Left ventricle myocardium superior (tissue), 1 donor: ENCODE measurements at regions of chr11 and their contacts with region 1.

Region 1: DNA sequence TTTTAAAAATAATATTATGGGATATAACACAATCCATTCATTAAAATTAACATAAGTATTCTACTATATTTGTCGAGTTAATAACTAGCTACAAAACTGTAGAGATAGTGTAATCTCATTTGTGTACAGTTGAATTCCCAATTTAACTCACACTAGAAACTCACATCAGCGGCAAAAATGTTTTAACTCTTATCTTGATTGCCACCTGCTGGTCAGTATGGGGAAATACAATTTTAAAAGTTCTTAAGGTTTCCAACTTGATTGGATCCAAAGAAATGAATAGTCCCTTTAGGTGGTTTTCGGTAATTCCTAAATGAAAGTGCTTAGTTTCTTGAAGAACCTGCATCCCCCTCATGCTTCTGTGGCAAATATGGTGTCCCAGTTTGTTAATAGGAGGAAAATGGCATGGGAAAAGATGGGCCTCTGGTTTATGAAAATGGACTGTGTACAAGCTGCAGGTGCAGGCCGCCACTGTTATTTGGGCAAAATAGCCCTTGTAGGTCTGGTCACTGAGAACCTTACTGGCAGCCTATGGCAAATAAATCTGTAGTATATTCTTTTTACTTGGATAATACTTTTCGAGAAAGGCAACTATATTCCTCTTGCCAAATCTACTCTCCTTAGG is 33.7 kb upstream of the SLC17A6 start:
- DNase-seq: no peak
- ATAC-seq: no peak

Region 2: DNA sequence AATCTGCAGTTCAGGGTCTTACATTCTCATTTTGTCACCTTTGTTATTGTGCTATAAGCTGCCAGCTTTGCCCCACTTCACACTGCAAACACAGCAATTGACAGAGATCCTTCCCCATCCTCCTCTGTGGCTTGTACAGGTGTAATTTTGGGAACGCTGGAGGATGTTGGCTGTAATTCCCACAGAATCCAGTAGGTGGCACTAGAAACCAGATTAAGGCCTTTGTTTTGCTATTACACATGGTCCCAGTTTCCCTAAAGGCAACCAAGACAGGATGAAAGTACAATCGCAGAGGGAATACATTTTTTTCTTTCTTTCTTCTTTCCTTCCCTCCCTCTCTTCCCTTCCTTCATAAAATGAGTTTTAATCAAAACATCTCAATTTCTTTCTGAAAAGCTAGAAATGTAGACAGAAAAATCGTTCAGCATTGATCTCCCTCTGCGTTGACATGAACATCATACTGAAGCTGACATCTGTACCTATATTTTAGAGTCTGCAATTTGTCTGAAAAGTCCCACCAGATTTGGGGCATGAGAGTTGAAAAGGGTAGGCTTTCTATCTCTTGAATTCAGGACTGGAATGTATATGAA is 1656.4 kb before region 1 on chr11:
- intact Hi-C with region 1: loop called (anchors 10 kb)
- DNase-seq: no peak
- ATAC-seq: peak; percentile 45

Region 3: GRCh38 chr11:22169833-22170232 is 134.6 kb before region 1 on chr11:
- intact Hi-C with region 1: loop called (anchors 5 kb)
- DNase-seq: no peak
- ATAC-seq: no peak